ENCODE measurements at regions of chr22 and their contacts with region 1.

Region 1: DNA sequence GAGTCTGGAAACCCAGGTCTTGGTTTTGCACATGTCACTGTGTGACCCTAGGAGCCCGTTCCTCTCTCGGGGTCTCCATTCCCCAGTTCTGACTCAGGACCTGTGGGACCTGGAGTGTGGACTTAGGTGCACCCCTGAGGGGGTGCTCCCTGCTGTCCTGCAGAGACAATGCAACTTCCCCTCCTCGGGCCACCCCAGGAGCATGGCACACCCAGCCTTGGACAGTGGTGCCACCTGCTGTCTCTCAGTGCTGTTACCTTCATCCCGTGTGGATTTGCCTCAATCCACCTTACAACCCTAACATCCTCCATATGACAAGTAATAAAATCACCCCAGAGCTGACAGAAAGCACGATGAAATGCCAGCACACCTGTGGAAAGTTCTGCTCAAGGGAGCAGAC is 27.5 kb upstream of the CRYBB3 start:
- DNase-seq: no peak
- ATAC-seq: peak in 7 of 8 donors; percentile 35 to 76 (median 66)
- H3K4me3 ChIP-seq: no peak overlapping the region
- H3K27ac ChIP-seq: no peak overlapping the region
- H3K4me1 ChIP-seq: peaks cover 0 to 3% (median 0%) of the 10 kb centered on the region in 9 donors
- H3K27me3 ChIP-seq: no peaks in the 10 kb centered on the region
- CTCF ChIP-seq: peak; percentile 30 to 66 (median 55)

Region 2: GRCh38 chr22:25081409-25081824 is 90.7 kb before region 1 on chr22:
- intact Hi-C with region 1: loop called in 3 of 10 experiments (anchors 5 to 10 kb)
- DNase-seq: no peak
- ATAC-seq: peak in 4 of 8 donors; percentile 29 to 44 (median 35)
- H3K4me3 ChIP-seq: no peak overlapping the region
- H3K27ac ChIP-seq: no peak overlapping the region
- H3K4me1 ChIP-seq: peaks cover 0 to 51% (median 15%) of the 10 kb centered on the region in 9 donors
- H3K27me3 ChIP-seq: no peaks in the 10 kb centered on the region
- CTCF ChIP-seq: peak; percentile 18 to 66 (median 57)

Region 3: GRCh38 chr22:25110846-25111578 is 61.1 kb before region 1 on chr22:
- intact Hi-C with region 1: loop called (anchors 1 to 10 kb)
- DNase-seq: peak; percentile 49 to 70
- ATAC-seq: peak; percentile 82 to 89 (median 85)
- H3K4me3 ChIP-seq: peak overlapping the region; percentile 27 to 77 (median 61)
- H3K27ac ChIP-seq: peak overlapping the region; percentile 25 to 77 (median 68)
- H3K4me1 ChIP-seq: peaks cover 7 to 59% (median 31%) of the 10 kb centered on the region in 9 donors
- H3K27me3 ChIP-seq: peaks cover 0 to 18% (median 0%) of the 10 kb centered on the region in 7 donors
- CTCF ChIP-seq: peak; percentile 4 to 71 (median 63)

Region 4: GRCh38 chr22:25160120-25160996 is 11.8 kb before region 1 on chr22:
- intact Hi-C with region 1: loop called in 1 of 10 experiments (anchors 1 kb)
- DNase-seq: no peak
- ATAC-seq: no peak
- H3K4me3 ChIP-seq: no peak overlapping the region
- H3K27ac ChIP-seq: no peak overlapping the region
- H3K4me1 ChIP-seq: peaks cover 0 to 37% (median 16%) of the 10 kb centered on the region in 9 donors
- H3K27me3 ChIP-seq: no peaks in the 10 kb centered on the region
- CTCF ChIP-seq: no peak